PC-9 (cell line): ENCODE measurements at regions of chr17 and their contacts with region 1.

Region 1: DNA sequence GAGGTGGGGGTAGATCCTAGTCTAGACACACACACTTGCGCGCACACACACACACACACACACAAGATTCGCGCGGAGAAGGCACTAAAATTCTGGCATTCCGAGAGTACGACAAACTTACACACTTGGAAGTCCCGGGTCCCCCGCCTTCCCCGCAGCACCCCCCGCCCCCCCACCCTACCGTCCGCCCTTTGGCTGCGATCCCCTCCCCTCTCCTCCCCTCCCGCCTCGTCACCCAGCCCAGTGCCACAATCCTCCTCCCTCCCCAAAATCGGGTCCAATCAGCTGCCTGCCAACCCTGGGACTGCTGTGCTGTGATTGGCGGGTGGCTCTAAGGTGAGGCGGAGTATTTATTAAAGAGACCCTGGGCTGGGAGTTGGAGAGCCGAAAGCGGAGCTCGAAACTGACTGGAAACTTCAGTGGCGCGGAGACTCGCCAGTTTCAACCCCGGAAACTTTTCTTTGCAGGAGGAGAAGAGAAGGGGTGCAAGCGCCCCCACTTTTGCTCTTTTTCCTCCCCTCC is at the start of gene SOX9:
- DNase-seq: peak; percentile 91 to 92
- H3K4me3 ChIP-seq: peak within 1 kb of the TSS; percentile 90
- H3K27ac ChIP-seq: peak within 1 kb of the TSS; percentile 89
- H3K4me1 ChIP-seq: peaks cover 40% of the 10 kb centered on the region
- H3K27me3 ChIP-seq: no peaks in the 10 kb centered on the region
- CTCF ChIP-seq: no peak
- total RNA-seq, gene SOX9: 21.7 and 25.0 TPM in 2 replicates

Region 2: GRCh38 chr17:70636517-70637133 is 1484.1 kb before region 1 on chr17:
- CTCF ChIA-PET with region 1: no interaction called
- POLR2A ChIA-PET with region 1: no interaction called
- intact Hi-C with region 1: loop called (anchors 1 kb)
- DNase-seq: peak in 1 of 2 experiments; percentile 1
- H3K4me3 ChIP-seq: no peak overlapping the region
- H3K27ac ChIP-seq: no peak overlapping the region
- H3K4me1 ChIP-seq: no peaks in the 10 kb centered on the region
- H3K27me3 ChIP-seq: no peaks in the 10 kb centered on the region
- CTCF ChIP-seq: peak; percentile 92

Region 3: DNA sequence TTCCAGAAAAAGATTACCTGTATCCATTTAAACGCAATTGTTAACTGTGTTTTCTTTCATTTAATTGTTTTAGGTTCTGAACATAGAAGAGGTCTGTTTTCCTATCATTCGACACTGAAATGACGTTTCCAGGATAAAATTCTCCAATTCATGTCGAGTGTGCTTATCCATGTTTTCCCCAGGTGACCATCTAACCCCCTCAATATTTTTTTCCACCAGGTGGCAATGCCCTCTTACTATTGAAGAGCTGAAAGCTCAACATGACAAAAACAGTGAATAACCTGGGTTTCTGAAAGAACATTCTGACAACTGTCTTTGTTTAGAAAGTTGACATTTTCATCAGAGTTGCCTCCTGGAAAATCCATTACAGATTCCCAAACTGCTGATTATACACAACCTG is 1002.7 kb before region 1 on chr17:
- CTCF ChIA-PET with region 1: no interaction called
- POLR2A ChIA-PET with region 1: interaction called, 3 read pairs
- intact Hi-C with region 1: loop called (anchors 1 kb)
- DNase-seq: peak in 1 of 2 experiments; percentile 27
- H3K4me3 ChIP-seq: no peak overlapping the region
- H3K27ac ChIP-seq: no peak overlapping the region
- H3K4me1 ChIP-seq: 0 out of 2 replicates have a peak, but pooled peaks cover 3% of the 10 kb centered on the region
- H3K27me3 ChIP-seq: no peaks in the 10 kb centered on the region
- CTCF ChIP-seq: peak; percentile 69

Region 4: DNA sequence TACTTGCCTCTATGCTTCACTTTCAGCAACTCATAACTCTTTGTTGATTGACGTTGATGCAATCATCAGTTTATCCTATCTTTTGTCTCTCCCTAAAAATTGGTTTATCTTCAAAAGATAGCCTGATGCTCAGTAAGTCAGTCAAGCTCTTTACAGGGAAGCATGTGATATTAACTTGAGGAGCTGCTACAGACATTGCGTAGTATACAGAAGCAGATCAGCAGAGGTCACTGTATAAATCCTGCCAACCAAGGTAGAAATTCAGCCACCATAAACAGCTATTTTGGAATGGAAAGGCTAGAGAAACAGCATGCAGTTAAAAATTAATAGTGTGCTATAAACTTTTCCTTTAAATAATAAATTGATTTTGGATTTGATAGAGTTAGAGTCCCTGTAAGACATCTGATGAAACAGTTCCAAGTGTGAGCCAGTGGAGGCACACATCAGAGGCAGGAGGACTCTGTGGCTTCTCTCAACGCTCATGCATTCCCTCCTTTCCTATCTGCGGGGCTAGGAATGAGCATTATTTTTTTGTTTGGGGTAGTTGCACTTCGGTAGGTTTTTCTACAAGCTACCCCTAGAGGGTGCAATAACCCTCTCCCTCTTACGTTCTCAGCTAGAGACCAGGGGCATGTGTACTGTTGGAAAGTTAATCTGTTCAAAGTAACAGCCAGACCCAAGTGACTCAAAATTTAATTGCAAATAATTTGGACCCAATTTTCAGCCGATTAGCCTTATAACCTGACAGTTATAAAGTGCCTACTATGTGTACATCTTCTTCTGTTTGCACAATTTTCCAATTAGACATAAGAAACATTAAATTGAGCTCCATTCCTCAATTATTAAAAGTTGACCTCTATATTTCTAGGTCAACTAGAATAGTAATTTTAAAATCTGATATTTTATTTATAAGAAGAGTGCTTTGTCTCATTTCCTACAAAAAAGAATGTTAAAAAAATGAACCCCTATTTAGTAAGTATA is 647.6 kb before region 1 on chr17:
- CTCF ChIA-PET with region 1: interaction called, 4 read pairs
- POLR2A ChIA-PET with region 1: no interaction called
- intact Hi-C with region 1: loop called (anchors 1 kb)
- DNase-seq: peak; percentile 18 to 45
- H3K4me3 ChIP-seq: no peak overlapping the region
- H3K27ac ChIP-seq: no peak overlapping the region
- H3K4me1 ChIP-seq: no peaks in the 10 kb centered on the region
- H3K27me3 ChIP-seq: no peaks in the 10 kb centered on the region
- CTCF ChIP-seq: peak; percentile 76

Region 5: GRCh38 chr17:71900621-71901229 is 220.0 kb before region 1 on chr17:
- CTCF ChIA-PET with region 1: no interaction called
- POLR2A ChIA-PET with region 1: no interaction called
- intact Hi-C with region 1: loop called (anchors 2 kb)
- DNase-seq: peak; percentile 65 to 93
- H3K4me3 ChIP-seq: peak overlapping the region; percentile 35; the same call in 1 of the 2 replicates
- H3K27ac ChIP-seq: peak overlapping the region; percentile 91
- H3K4me1 ChIP-seq: peaks cover 46% of the 10 kb centered on the region
- H3K27me3 ChIP-seq: no peaks in the 10 kb centered on the region
- CTCF ChIP-seq: no peak

Region 6: DNA sequence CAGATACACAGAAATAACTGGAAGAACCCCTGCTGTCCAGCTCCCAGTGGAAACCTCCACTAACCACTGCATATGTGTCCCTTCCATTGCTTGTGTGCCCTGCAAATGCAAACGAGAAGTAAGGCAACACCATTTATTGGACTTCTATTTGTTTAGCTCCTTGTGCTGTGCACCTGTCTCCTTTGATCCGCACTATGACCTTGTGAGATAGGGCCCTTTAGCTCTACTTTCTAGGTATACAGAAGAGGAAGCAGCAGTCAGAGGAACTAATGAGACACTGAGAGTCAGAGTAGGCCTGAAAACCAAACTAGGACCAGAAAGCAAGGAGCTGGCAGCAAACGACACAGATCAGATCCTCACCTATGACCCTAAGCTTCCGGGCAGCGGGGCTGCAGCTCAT is 22.5 kb after region 1 on chr17:
- CTCF ChIA-PET with region 1: no interaction called
- POLR2A ChIA-PET with region 1: no interaction called
- intact Hi-C with region 1: no loop called
- DNase-seq: no peak
- H3K4me3 ChIP-seq: no peak overlapping the region
- H3K27ac ChIP-seq: no peak overlapping the region
- H3K4me1 ChIP-seq: peaks cover 11% of the 10 kb centered on the region
- H3K27me3 ChIP-seq: no peaks in the 10 kb centered on the region
- CTCF ChIP-seq: no peak

Region 7: DNA sequence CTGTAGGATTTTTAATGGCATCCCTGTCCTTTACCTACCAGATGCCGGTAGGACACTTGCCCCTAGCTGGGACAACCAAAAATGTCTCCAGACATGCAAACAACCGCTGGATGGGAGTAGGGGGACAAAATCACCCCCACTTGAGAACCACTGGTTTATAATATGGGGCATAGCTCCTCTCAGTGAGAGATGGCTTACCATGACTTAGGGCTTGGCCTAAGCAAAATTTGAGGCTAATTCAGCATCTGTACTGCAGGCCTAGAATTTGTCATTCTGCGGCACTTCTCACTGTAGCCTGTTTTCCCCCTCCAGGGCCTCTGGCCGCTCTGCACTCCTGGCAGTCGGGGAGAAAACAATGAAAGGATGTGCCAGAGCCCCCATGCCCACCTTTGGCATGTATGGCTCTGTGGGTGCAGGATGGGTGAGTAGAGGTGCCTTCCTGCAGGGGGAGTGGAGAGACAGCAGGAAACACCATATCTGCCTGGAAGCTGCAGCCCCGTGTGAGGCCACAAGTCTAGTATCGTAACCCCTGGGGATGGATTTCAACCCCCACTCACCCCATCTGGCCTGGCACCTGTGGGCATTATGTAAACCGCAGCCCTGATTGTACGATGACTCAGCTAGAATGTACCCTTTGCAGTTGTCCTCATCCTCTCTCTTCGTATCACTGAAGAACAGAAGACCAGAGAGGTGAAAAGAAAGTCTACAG is 268.2 kb after region 1 on chr17:
- CTCF ChIA-PET with region 1: interaction called, 10 read pairs
- POLR2A ChIA-PET with region 1: interaction called, 5 read pairs
- intact Hi-C with region 1: loop called (anchors 1 kb)
- DNase-seq: peak; percentile 86 to 89
- H3K4me3 ChIP-seq: no peak overlapping the region
- H3K27ac ChIP-seq: peak overlapping the region; percentile 87
- H3K4me1 ChIP-seq: peaks cover 86% of the 10 kb centered on the region
- H3K27me3 ChIP-seq: no peaks in the 10 kb centered on the region
- CTCF ChIP-seq: peak; percentile 63

Region 8: DNA sequence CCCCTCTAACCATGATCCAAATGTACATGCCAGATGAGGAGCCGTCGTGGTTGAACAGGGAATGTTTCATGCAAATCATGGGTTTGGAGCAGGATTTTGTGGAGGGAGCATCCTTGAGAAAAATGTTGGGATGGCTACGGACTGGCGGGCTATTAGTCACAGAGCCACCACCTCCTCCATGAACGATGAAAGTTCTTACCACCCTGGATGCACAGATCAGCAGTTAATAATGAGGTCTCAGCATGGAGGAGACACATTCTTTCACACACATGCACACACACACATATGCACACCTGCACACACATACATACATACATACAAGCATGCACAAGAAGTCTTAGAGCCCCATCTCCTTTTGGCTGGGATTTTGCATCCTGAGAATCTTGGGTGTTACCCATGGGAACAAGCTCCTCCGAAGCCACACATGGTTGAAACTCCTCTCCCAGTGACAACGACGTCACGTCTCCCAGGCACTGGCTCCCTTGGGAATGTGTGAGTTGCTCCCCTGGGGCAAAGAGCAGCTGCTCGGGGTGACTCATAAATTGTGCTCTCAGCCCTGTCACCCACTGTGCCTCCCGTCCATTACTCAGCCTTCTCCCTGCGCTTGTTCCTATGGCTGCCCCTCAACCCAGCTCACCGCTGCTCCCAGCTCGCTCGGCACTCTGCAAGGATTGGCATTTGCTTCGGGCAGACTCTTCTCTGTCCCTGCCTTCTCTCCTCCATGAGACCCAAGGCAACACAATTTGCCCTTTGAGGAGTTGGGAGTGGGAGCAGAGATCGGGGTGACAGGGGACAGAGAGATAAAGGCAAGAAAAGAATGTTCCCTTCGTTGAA is 344.7 kb after region 1 on chr17:
- CTCF ChIA-PET with region 1: no interaction called
- POLR2A ChIA-PET with region 1: interaction called, 8 read pairs
- intact Hi-C with region 1: loop called (anchors 1 kb)
- DNase-seq: peak; percentile 92 to 97
- H3K4me3 ChIP-seq: peak overlapping the region; percentile 53
- H3K27ac ChIP-seq: peak overlapping the region; percentile 100
- H3K4me1 ChIP-seq: peaks cover 79% of the 10 kb centered on the region
- H3K27me3 ChIP-seq: no peaks in the 10 kb centered on the region
- CTCF ChIP-seq: no peak